Ascending aorta (tissue), 2 donors: ENCODE measurements at regions of chr10 and their contacts with region 1.

Region 1: GRCh38 chr10:119859420-119860258 is 13.0 kb downstream of the MCMBP start:
- DNase-seq: no peak
- H3K4me3 ChIP-seq: no peak overlapping the region
- H3K27ac ChIP-seq: no peak overlapping the region
- H3K4me1 ChIP-seq: no peaks in the 10 kb centered on the region
- H3K27me3 ChIP-seq: no peaks in the 10 kb centered on the region
- CTCF ChIP-seq: peak; percentile 43 to 61 (median 52)

Region 2: DNA sequence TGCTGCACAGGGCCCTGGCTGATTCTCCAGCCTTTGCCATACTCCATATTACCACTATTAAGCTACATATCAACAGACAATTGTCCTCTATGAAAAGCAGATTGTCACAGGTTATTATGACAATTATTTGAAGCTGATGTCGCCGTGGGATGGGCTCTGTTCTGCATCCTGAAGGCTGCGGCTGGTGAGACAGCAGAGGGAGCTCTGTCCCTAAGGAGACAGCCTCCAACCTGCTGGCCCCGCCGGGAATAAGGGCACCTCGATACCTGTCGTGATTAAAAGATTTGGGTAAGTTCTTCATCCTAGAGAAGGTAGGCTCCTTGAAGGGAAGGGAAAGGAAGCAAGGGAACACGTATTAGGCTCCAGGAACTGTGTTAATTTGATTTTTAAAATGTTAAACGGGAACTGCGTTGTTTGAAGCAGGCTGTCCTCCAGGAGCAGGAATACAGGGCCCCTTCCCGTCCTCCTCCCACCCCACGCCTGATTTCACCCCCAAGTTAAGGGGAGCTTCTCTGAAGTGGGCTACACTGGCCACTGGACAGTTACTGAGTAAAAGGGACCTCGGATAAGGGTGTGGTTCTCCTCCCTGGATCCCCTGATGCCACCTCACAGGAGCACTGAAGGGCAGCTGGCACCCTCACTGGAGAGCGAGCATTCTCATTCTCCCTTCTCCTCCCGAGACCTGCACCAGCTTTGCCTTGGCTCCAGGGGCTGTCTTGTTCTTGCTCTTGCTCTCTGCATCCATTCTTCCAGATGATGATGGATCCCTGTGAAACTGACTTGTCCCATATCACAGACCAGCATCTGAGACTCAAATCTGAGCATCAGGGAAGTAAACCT is 251.1 kb before region 1 on chr10:
- intact Hi-C with region 1: loop called (anchors 2 kb)
- DNase-seq: peak in 1 of 2 donors; percentile 67
- H3K4me3 ChIP-seq: peak overlapping the region in 1 of 2 donors; percentile 42
- H3K27ac ChIP-seq: no peak overlapping the region
- H3K4me1 ChIP-seq: no peaks in the 10 kb centered on the region
- H3K27me3 ChIP-seq: no peaks in the 10 kb centered on the region
- CTCF ChIP-seq: peak; percentile 43 to 77 (median 58)

Region 3: GRCh38 chr10:119686439-119687191 is 173.0 kb before region 1 on chr10:
- intact Hi-C with region 1: loop called (anchors 2 kb)
- DNase-seq: peak; percentile 43 to 86
- H3K4me3 ChIP-seq: peak overlapping the region in 1 of 2 donors; percentile 34
- H3K27ac ChIP-seq: no peak overlapping the region
- H3K4me1 ChIP-seq: peaks cover 6 to 11% of the 10 kb centered on the region in 2 donors
- H3K27me3 ChIP-seq: no peaks in the 10 kb centered on the region
- CTCF ChIP-seq: peak; percentile 90 to 96 (median 96)

Region 4: GRCh38 chr10:119750391-119751230 is 109.0 kb before region 1 on chr10:
- intact Hi-C with region 1: loop called (anchors 5 kb)
- DNase-seq: peak in 1 of 2 donors; percentile 87
- H3K4me3 ChIP-seq: no peak overlapping the region
- H3K27ac ChIP-seq: no peak overlapping the region
- H3K4me1 ChIP-seq: peaks cover 0 to under 1% of the 10 kb centered on the region in 2 donors
- H3K27me3 ChIP-seq: no peaks in the 10 kb centered on the region
- CTCF ChIP-seq: peak; percentile 87 to 93 (median 92)